ENCODE measurements at regions of chr15 and their contacts with region 1.

Region 1: DNA sequence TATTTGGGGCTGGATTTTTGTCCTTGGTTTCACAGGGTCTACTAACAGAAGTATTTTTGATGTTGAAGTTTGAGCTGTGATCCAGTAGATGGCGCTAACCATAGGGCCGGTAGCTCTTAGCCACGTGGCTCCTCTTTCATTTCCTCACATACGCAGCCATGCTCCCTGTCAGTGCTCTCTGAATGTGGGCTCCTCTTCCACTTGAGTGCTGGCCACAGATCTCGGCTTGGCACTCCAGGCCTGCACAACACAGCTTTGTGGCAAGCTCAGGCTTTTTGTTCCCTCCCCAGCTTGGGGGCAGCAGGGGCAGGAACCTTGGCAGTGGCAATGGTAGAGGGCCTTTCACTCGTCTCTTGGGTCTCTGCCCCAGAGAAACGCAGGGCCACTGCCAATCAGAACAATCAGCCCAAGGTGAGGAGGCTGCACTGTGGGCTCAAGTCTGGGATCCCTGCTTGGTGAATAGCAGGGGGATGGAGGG is 18.6 kb upstream of the DNAAF4 start:
- DNase-seq: peak; percentile 39
- H3K4me3 ChIP-seq: no peak overlapping the region
- H3K27ac ChIP-seq: no peak overlapping the region
- H3K4me1 ChIP-seq: no peaks in the 10 kb centered on the region
- H3K27me3 ChIP-seq: peaks cover 2% of the 10 kb centered on the region
- CTCF ChIP-seq: peak; percentile 72 to 79

Region 2: DNA sequence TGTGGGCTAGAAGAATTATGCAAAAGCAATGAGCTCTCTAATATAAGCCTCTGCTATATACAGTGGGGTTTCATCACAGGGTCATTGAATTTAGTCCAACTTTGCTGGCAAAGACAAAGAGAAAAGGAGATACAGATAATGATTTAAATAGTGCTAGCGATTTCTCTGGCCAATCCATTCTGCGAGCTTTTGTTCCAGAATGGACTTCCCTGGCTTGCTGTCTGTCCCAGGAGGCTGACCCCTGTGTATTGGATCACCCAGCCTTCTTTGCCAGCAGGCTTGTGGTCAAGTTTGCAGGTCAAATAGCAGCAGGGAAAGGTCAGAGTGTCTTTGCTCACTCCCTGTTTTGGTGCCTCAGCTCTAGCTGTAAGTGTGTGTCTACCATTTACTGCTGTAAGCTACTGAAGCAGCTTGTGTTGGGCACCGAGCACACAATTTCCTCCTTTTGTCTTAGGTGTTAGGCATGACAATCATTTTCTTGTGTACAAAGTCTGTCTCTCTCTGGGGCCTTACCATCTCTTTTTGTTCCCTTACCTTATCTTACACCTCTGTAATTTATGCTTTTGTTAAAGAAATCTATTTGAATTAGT is 1492.6 kb before region 1 on chr15:
- CTCF ChIA-PET with region 1: no interaction called
- dilution Hi-C with region 1: no loop called
- in situ Hi-C with region 1: no loop called
- intact Hi-C with region 1: no loop called
- DNase-seq: no peak
- H3K4me3 ChIP-seq: no peak overlapping the region
- H3K27ac ChIP-seq: no peak overlapping the region
- H3K4me1 ChIP-seq: no peaks in the 10 kb centered on the region
- H3K27me3 ChIP-seq: no peaks in the 10 kb centered on the region
- CTCF ChIP-seq: no peak

Region 3: GRCh38 chr15:55588070-55588814 is 61.6 kb after region 1 on chr15 and contains the start of gene PYGO1:
- CTCF ChIA-PET with region 1: no interaction called
- dilution Hi-C with region 1: no loop called
- in situ Hi-C with region 1: no loop called
- intact Hi-C with region 1: loop called (anchors 10 kb)
- DNase-seq: peak; percentile 34
- H3K4me3 ChIP-seq: peak within 1 kb of the TSS; percentile 51 to 57 (median 53)
- H3K27ac ChIP-seq: no peak within 1 kb of the TSS
- H3K4me1 ChIP-seq: peaks cover 3% of the 10 kb centered on the region
- H3K27me3 ChIP-seq: peaks cover 18% of the 10 kb centered on the region
- CTCF ChIP-seq: no peak
- total RNA-seq, gene PYGO1: 1.0 to 5.8 TPM

Region 4: DNA sequence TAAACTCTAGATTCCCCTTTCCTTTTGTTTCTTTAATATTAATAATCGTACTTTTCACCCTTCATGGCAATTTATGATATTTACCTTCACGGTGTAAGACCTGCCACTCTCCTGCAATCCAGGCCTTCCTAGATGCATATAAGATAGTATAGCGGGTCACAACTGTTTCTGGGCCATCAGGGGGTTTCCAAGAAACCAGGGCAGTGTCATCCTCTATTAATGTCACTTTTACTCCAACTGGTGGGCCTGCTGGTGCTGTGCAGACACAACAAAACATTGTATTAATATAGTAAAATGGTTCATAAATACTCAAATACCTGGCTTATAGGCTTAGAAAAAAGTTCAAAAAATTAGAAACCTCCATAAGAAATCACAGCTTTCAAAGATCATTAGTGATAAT is 110.5 kb after region 1 on chr15:
- CTCF ChIA-PET with region 1: interaction called, 4 read pairs
- dilution Hi-C with region 1: no loop called
- in situ Hi-C with region 1: loop called (anchors 5 to 10 kb)
- intact Hi-C with region 1: loop called (anchors 1 kb)
- DNase-seq: no peak
- H3K4me3 ChIP-seq: no peak overlapping the region
- H3K27ac ChIP-seq: no peak overlapping the region
- H3K4me1 ChIP-seq: no peaks in the 10 kb centered on the region
- H3K27me3 ChIP-seq: no peaks in the 10 kb centered on the region
- CTCF ChIP-seq: no peak

Measured in mammary epithelial cell (primary cell).